WTC11 (cell line): ENCODE measurements at regions of chr3 and their contacts with region 1.

Region 1: GRCh38 chr3:171459942-171460724 is at the start of gene TNIK:
- DNase-seq: peak; percentile 87
- ATAC-seq: peak; percentile 75
- H3K4me3 Mint-ChIP-seq: peak within 1 kb of the TSS; percentile 95
- H3K27ac Mint-ChIP-seq: peak within 1 kb of the TSS; percentile 82
- H3K4me1 Mint-ChIP-seq: peaks cover 33% of the 10 kb centered on the region
- H3K27me3 Mint-ChIP-seq: no peaks in the 10 kb centered on the region
- CTCF ChIP-seq: no peak
- total RNA-seq, gene TNIK: 50.3 to 53.0 TPM (median 51.9 TPM) in 3 replicates

Region 2: GRCh38 chr3:171428321-171428787 is 31.8 kb before region 1 on chr3:
- CTCF ChIA-PET with region 1: interaction called, 10 read pairs
- POLR2A ChIA-PET with region 1: no interaction called
- DNase-seq: peak; percentile 23
- ATAC-seq: peak; percentile 73
- H3K4me3 Mint-ChIP-seq: no peak overlapping the region
- H3K27ac Mint-ChIP-seq: no peak overlapping the region
- H3K4me1 Mint-ChIP-seq: peaks cover 19% of the 10 kb centered on the region
- H3K27me3 Mint-ChIP-seq: no peaks in the 10 kb centered on the region
- CTCF ChIP-seq: no peak

Region 3: GRCh38 chr3:171503817-171504216 is 43.7 kb after region 1 on chr3:
- CTCF ChIA-PET with region 1: no interaction called
- POLR2A ChIA-PET with region 1: no interaction called
- DNase-seq: no peak
- ATAC-seq: no peak
- H3K4me3 Mint-ChIP-seq: no peak overlapping the region
- H3K27ac Mint-ChIP-seq: no peak overlapping the region
- H3K4me1 Mint-ChIP-seq: peaks cover 9% of the 10 kb centered on the region
- H3K27me3 Mint-ChIP-seq: no peaks in the 10 kb centered on the region
- CTCF ChIP-seq: no peak

Region 4: DNA sequence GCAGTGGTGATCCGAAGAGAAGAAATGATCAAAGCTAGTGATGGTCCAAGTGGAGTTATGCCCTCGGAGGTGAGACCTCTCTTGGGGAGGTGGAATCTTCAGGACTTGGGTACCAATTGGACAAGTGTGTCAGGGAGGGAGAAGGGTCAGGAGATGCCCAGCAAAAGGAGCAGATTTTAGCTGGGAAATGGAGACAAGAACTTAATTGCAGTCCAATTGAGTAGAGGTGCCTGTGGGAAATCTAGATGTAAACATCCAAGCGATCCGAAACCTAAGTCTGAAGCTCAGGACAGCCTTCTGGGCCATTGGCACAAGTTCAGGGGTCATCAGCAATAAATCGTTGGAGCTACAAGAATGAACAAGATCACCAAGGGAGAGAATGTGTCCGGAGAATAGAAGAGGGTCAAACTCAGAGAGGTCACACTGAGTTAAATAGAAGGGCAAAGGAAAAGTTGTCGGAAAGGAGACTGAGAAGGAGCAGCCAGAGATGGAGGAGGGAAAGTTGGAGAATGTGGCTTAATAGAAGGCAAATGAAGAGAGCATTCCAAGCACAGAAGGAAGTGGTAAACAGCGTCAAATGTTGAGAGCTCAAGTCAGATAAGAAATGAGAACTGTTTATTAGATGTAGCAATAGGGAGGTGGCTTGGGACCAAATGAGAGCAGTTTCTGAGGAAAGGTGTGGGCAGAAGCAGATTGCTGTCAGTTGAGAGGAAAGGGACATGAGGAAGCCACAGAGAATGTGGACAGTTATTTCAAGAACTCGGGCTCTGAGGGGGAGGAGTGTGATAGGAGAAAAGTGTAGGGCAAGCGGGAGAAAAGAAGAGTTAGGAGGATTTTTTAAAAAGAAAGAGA is 515.1 kb after region 1 on chr3:
- CTCF ChIA-PET with region 1: no interaction called
- POLR2A ChIA-PET with region 1: no interaction called
- DNase-seq: no peak
- ATAC-seq: no peak
- H3K4me3 Mint-ChIP-seq: no peak overlapping the region
- H3K27ac Mint-ChIP-seq: no peak overlapping the region
- H3K4me1 Mint-ChIP-seq: peaks cover 8% of the 10 kb centered on the region
- H3K27me3 Mint-ChIP-seq: no peaks in the 10 kb centered on the region; the same call in 1 of the 2 replicates
- CTCF ChIP-seq: no peak